AG04450 (cell line): ENCODE measurements at regions of chr3 and their contacts with region 1.

Region 1: DNA sequence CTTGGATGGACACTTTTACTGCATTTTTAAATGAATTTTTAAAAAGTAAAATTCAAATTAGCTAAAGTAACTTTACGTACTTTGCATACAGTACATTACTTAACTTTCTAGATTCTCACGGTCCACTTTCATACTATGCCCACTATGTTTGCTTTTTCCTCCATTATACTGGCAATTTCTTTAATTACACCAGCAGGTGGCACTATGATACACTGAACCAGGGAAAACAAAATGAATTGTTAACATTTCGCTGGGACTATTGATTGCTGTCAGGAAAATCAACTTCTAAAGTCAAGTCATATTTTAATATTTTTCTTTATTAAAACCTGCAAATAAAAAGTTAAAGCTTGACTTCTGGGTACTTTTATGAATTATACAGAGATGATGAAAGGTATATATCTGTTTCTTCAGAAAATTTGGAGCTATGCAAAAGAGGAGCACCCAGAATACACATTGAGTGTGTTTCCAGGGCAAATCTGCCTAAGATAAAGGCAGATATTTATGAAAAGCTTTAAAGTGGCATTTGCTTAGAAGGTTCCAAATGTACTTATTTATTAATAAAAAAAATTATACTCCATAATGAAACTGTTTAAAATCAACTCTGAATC is 21.8 kb upstream of the POU1F1 start:
- DNase-seq: peak; percentile 7
- H3K4me3 ChIP-seq: no peak overlapping the region
- H3K27ac ChIP-seq: no peak overlapping the region
- H3K27me3 ChIP-seq: no peaks in the 10 kb centered on the region
- CTCF ChIP-seq: peak; percentile 67

Region 2: GRCh38 chr3:87272718-87273341 is 25.4 kb before region 1 on chr3:
- CTCF ChIA-PET with region 1: interaction called, 22 read pairs
- POLR2A ChIA-PET with region 1: no interaction called
- DNase-seq: no peak
- H3K4me3 ChIP-seq: no peak overlapping the region
- H3K27ac ChIP-seq: no peak overlapping the region
- H3K27me3 ChIP-seq: no peaks in the 10 kb centered on the region
- CTCF ChIP-seq: no peak

Region 3: GRCh38 chr3:87287011-87287410 is 11.2 kb before region 1 on chr3:
- CTCF ChIA-PET with region 1: interaction called, 42 read pairs
- POLR2A ChIA-PET with region 1: no interaction called
- DNase-seq: no peak
- H3K4me3 ChIP-seq: no peak overlapping the region
- H3K27ac ChIP-seq: no peak overlapping the region
- H3K27me3 ChIP-seq: no peaks in the 10 kb centered on the region
- CTCF ChIP-seq: no peak

Region 4: GRCh38 chr3:87503900-87504508 is 205.8 kb after region 1 on chr3:
- CTCF ChIA-PET with region 1: interaction called, 26 read pairs
- POLR2A ChIA-PET with region 1: no interaction called
- DNase-seq: peak; percentile 15
- H3K4me3 ChIP-seq: no peak overlapping the region
- H3K27ac ChIP-seq: no peak overlapping the region
- H3K27me3 ChIP-seq: no peaks in the 10 kb centered on the region
- CTCF ChIP-seq: peak; percentile 67

Region 5: GRCh38 chr3:88003115-88003755 is 705.0 kb after region 1 on chr3:
- CTCF ChIA-PET with region 1: interaction called, 45 read pairs
- POLR2A ChIA-PET with region 1: no interaction called
- DNase-seq: peak; percentile 8
- H3K4me3 ChIP-seq: no peak overlapping the region
- H3K27ac ChIP-seq: no peak overlapping the region
- H3K27me3 ChIP-seq: no peaks in the 10 kb centered on the region
- CTCF ChIP-seq: peak; percentile 78

Region 6: GRCh38 chr3:88180398-88180999 is 882.3 kb after region 1 on chr3:
- CTCF ChIA-PET with region 1: interaction called, 21 read pairs
- POLR2A ChIA-PET with region 1: no interaction called
- DNase-seq: peak; percentile 30
- H3K4me3 ChIP-seq: no peak overlapping the region
- H3K27ac ChIP-seq: no peak overlapping the region
- H3K27me3 ChIP-seq: no peaks in the 10 kb centered on the region
- CTCF ChIP-seq: peak; percentile 66